Heart right ventricle (tissue), 16 donors: ENCODE measurements at regions of chr1 and their contacts with region 1.

Region 1: DNA sequence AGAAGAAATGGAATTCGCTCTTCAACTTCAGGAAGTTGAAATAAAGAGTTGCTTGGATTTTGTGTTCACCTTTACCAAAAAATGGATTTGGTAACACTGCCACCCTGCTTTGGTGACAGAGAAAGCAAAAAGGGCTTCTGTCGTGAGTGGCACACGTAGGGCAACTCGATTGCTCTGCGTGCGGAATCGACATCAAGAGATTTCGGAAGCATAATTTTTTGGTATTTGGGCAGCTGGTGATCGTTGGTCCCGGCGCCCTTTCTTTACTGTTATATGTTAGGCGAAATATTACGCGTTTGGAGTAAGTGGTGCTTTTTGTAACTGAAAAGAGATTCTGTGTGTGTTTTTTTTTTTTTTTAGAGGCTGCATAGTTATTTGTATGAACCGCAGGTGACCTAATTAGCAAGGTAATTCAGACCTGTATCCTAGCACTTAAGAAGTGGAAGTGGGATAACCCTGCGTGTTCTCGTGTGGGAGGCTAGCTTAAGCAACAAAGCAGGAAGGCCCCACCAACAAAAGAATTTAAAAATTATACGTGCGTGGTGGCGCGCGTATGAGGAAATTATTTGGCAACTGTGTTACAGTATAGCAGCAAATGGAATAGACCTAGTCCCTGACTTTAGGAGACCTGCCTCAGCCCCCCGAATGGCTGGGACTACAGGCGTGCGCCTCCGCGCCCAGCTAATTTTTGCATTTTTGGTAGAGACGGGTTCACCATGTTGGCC is at the start of gene RNU11:
- DNase-seq: peak; percentile 69 to 91
- ATAC-seq: peak; percentile 83 to 92 (median 86)
- H3K4me3 ChIP-seq: peak within 1 kb of the TSS; percentile 2 to 58 (median 46)
- H3K27ac ChIP-seq: peak within 1 kb of the TSS; percentile 81 to 98 (median 92)
- H3K4me1 ChIP-seq: peaks cover 8 to 33% (median 27%) of the 10 kb centered on the region in 9 donors
- H3K27me3 ChIP-seq: no peaks in the 10 kb centered on the region
- CTCF ChIP-seq: no peak
- total RNA-seq, gene RNU11: not detected

Region 2: DNA sequence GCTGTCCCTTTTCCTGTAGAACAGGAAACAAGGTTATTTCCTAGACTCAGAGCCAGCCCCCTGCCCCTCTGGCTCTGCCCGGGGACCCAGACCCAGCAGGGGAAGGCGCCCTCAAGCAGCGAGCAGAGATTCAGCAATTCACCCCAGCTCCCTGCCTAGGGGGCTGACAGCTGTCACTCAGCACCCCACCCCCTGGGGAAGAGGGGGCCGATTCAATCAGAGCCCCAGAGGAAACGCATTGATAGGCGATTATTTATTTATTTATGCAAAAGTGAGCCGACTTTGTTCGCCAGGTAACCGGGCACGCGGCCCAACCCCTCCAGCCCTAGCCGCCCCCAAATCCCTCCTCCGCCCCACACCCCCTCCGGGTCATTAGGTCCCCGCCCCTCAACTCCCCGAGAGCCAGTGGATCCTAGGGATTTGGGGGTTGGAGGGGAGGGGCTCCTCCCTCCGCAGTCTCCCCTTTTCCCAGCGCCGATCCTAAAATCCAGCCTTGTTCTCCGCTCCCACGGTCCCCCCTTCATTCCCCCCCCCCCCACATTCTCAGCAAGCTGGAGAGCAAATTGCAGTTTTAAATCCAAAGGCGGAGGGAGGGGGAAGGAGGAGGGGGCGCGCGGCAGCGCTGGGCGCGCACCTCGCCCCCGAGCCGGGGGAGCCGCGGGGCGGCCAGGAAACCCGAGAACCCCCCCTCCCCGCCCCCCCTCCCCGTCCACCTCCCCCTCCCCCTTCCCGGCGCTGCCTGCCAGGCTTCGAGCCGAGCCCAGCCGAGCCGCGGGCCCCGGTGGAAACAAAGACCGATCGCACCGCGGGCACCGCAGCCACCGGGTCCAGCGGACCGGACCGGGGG is 1046.0 kb before region 1 on chr1:
- intact Hi-C with region 1: no loop called
- DNase-seq: peak; percentile 69
- ATAC-seq: peak in 7 of 8 donors; percentile 1 to 22 (median 17)
- H3K4me3 ChIP-seq: peak overlapping the region; percentile 42 to 100 (median 93)
- H3K27ac ChIP-seq: peak overlapping the region; percentile 89 to 100 (median 96)
- H3K4me1 ChIP-seq: peaks cover 38 to 83% (median 67%) of the 10 kb centered on the region in 9 donors
- H3K27me3 ChIP-seq: peaks cover 0 to 4% (median 0%) of the 10 kb centered on the region in 7 donors
- CTCF ChIP-seq: peak in 2 of 9 donors; percentile 9 to 22

Region 3: DNA sequence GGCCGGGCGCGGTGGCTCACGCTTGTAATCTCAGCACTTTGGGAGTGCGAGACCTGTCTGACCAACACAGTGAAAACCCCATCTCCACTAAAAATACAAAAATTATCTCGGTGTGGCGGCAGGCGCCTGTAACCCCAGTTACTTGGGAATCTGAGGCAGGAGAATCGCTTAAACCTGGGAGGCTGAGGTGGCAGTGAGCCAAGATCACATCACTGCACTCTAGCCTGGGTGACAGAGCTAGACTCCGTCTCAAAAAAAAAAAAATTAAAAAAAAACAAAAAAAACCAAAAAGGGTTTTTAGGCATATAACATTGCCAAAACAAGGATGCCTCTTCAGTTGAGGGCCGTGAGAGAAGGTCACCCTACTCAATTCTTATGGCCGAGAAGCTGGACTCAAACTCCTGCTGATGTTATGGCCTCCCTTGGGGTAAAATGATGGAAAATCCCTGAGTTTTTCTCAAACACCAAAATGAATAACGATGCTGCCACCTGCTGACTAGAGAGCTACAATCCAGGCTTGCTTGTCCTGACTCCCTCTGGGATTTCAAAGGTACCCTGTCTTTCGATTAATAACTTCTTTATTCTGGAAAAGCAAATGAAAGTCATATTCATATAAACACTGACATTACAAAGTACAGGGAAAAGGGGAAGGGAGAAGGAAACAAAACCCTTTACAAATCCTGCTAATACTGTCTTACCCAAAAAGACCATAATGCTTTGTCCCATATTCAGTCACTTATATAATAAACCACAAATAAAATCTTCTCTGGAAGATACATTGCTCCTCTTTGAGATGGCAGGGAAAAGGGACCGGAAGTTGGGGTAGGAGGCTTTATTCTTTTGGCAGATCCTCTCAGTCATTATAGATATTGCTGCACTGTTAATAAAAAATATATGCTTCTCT is 45.8 kb before region 1 on chr1:
- intact Hi-C with region 1: no loop called
- DNase-seq: peak in 1 of 2 donors; percentile 72
- ATAC-seq: peak in 7 of 8 donors; percentile 43 to 82 (median 74)
- H3K4me3 ChIP-seq: no peak overlapping the region
- H3K27ac ChIP-seq: peak overlapping the region in 1 of 10 donors; percentile 8
- H3K4me1 ChIP-seq: peaks cover 0 to 15% (median 0%) of the 10 kb centered on the region in 9 donors
- H3K27me3 ChIP-seq: no peaks in the 10 kb centered on the region
- CTCF ChIP-seq: peak in 8 of 9 donors; percentile 53 to 78 (median 68)

Region 4: GRCh38 chr1:28668191-28668955 is 19.7 kb after region 1 on chr1 and contains the start of gene GMEB1:
- intact Hi-C with region 1: loop called in 4 of 10 experiments (anchors 1 to 2 kb)
- DNase-seq: peak; percentile 83 to 90
- ATAC-seq: peak; percentile 88 to 95 (median 92)
- H3K4me3 ChIP-seq: peak within 1 kb of the TSS; percentile 93 to 100 (median 98)
- H3K27ac ChIP-seq: peak within 1 kb of the TSS; percentile 98 to 100 (median 100)
- H3K4me1 ChIP-seq: peaks cover 5 to 26% (median 18%) of the 10 kb centered on the region in 9 donors
- H3K27me3 ChIP-seq: no peaks in the 10 kb centered on the region
- CTCF ChIP-seq: no peak
- total RNA-seq, gene GMEB1: 5.1 to 7.4 (median 6.4) TPM

Region 5: DNA sequence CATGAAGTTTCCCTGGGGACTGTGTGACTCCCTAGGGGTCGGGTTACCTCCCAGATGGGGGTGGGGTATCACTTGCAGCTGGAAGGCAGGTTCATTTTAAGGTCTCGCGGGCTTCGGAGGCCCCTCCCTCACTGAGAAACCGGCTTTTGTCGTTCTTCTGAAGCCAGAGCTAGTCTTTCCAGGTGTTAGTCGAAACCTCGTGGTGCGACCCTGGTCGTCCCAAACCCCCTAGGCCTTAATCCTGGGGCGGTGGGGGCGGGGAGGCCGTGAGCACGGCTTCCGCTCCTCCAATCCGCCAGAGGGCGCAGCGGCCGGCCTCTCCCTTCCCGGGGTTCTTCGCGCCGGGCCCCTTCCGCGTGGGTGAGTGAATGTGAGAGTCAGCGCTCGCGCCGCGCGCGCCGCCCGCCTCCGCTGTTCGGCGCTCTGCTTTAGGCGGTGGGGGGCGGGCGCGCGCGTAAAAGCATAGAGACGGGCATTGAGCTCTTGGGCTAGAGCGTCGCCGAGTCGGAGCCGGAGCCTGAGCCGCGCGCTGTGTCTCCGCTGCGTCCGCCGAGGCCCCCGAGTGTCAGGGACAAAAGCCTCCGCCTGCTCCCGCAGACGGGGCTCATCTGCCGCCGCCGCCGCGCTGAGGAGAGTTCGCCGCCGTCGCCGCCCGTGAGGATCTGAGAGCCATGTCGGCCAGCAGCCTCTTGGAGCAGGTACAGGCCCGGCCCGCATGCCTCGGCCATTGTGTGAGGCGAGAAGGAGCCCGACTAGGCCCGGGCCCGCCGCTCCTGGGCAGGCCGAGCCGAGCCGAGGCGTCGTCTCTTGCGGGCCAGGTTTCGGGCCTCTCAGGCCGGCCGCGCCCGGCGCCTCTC is 88.0 kb after region 1 on chr1 and contains the start of gene YTHDF2:
- intact Hi-C with region 1: loop called in 8 of 10 experiments (anchors 1 to 10 kb)
- DNase-seq: peak; percentile 98 to 99
- ATAC-seq: peak; percentile 99
- H3K4me3 ChIP-seq: peak within 1 kb of the TSS; percentile 66 to 99 (median 95)
- H3K27ac ChIP-seq: peak within 1 kb of the TSS; percentile 42 to 99 (median 96)
- H3K4me1 ChIP-seq: peaks cover 7 to 49% (median 42%) of the 10 kb centered on the region in 9 donors
- H3K27me3 ChIP-seq: no peaks in the 10 kb centered on the region
- CTCF ChIP-seq: peak; percentile 94 to 100 (median 96)
- total RNA-seq, gene YTHDF2: 31.2 to 57.1 (median 44.6) TPM